ENCODE measurements at regions of chr4 and their contacts with region 1.

Region 1: DNA sequence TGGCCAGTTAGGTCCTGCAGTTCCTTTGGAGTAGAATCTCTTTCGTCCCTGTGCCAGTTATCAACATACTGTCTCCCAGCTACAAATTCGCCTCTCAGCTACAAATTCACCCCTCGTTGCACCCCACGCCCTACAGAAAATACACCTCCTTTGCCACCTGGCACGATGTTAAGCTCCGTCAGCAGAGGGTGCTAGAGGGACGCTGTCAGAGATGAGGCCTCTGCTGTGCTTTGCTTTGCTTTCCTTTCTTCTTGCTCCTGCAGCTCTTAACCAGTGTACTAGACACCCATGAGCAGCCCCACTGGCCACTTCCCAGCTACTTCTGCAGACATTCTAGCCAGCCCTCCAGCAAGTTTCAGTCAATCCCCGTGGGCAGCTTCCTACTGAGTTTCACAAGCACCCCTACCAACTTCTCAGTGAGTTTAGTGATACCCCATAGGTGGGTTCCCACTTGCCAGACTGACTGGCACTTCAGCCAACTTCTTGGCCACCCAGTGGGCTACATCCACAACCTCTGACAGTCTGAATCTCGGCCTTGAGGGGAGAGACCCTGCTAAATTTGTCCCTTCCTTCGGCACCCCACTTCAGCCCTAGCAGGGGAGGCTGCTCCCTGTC is 21.8 kb downstream of the HAUS3 start:
- DNase-seq: peak; percentile 84
- ATAC-seq: peak; percentile 92

Region 2: DNA sequence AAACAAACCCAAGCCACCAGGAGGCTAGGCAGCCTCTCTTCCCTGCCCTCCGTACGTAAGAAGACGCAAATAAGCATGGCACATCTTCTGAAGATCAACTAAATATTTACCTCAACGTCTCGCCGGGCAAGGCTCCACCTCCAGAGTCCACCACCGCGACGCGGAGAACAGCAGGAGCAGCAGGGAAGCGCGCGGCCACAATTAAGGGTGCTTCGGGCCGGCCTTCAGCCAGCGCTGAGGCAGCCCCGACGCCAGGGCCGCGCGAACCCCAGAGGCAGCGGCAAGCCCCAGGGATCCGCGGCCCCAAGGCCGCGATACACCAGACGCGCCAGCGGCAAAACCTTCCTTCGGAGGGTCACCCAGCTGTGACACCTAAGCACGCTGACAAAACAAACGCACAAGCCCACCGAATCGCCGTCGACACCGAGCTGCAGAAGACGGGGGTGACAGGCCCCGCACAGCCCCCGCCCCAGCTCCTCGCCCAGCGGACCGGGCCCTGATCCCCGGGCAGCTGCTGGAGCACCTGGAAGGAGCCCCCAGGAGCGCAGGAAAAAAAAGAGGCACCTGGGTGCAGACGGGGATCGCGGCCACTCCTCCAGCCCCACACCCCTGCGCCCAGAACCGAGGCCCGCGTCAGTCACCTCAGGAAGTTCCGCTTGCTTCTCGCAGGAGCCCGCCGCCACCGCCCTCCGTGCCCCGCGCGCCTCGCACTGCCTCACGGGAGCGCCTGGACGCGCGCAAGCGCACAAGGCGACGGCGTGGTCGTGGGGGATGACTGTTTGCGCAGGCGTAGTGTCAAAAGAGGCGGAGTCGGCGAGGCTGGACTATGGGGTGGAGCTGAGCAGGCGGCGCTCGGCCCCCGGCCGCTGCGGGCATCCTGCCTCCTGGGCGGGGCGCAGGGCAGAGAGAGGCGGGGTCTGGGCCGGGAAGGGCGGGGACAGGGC is 21.6 kb after region 1 on chr4 and contains the starts of genes HAUS3 and POLN:
- intact Hi-C with region 1: no loop called
- DNase-seq: peak; percentile 100
- ATAC-seq: peak; percentile 98
- total RNA-seq, gene HAUS3: 15.4 TPM
- total RNA-seq, gene POLN: 7.7 TPM

Region 3: GRCh38 chr4:2458546-2459491 is 238.7 kb after region 1 on chr4:
- intact Hi-C with region 1: loop called (anchors 10 kb)
- DNase-seq: no peak
- ATAC-seq: no peak